ENCODE measurements at regions of chr19 and their contacts with region 1.

Region 1: GRCh38 chr19:48970923-48971395 is 5.8 kb downstream of the FTL start:
- DNase-seq: peak; percentile 91 to 96
- ATAC-seq: peak; percentile 66
- H3K4me3 ChIP-seq: no peak overlapping the region
- H3K27ac ChIP-seq: peak overlapping the region in 1 of 2 donors; percentile 32
- H3K4me1 ChIP-seq: no peaks in the 10 kb centered on the region
- H3K27me3 ChIP-seq: no peaks in the 10 kb centered on the region

Region 2: GRCh38 chr19:48646001-48646721 is 324.8 kb before region 1 on chr19 and contains the start of gene CA11:
- intact Hi-C with region 1: loop called in 1 of 2 experiments (anchors 10 kb)
- DNase-seq: peak; percentile 92 to 95
- ATAC-seq: peak; percentile 95
- H3K4me3 ChIP-seq: peak within 1 kb of the TSS; percentile 7 to 8
- H3K27ac ChIP-seq: peak within 1 kb of the TSS; percentile 1 to 18
- H3K4me1 ChIP-seq: peaks cover 0 to 3% of the 10 kb centered on the region in 2 donors
- H3K27me3 ChIP-seq: no peaks in the 10 kb centered on the region
- total RNA-seq, gene CA11: 6.4 to 12.0 TPM

Region 3: DNA sequence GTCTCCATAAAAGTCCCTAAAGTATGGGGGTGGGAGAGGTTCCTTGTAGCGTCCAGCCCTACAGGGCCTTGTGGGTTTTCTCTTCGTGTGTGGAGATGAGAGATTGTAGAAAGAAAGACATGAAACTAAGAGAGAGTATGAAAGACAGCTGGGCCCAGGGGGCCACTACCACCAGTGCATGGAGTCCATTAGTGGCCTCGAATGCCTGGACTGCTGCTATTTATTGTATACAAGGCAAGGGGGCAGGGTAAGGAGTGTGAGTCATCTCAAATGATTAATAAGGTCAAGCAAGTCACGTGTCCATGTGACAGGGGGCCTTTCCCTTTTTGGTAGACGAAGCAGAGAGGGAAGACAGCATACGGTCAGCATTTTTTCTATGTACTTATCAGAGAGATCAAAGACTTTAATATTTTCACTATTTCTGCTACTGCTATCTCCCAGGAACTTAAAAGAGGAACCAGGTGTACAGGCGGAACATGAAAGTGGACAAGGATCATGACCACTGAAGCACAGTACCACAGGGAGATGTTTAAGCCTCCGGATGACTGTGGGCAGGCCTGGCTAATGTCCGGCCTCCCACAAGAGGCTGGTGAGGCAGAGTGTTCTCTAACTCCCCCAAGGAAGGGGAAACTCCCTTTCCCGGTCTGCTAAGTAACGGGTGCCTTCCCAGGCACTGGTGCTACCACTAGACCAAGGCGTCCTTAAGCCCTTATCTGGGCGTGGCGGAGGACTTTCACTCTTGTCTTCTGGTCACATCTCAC is 190.1 kb before region 1 on chr19:
- intact Hi-C with region 1: loop called in 1 of 2 experiments (anchors 5 kb)
- DNase-seq: no peak
- ATAC-seq: no peak
- H3K4me3 ChIP-seq: no peak overlapping the region
- H3K27ac ChIP-seq: no peak overlapping the region
- H3K4me1 ChIP-seq: no peaks in the 10 kb centered on the region
- H3K27me3 ChIP-seq: no peaks in the 10 kb centered on the region

Region 4: DNA sequence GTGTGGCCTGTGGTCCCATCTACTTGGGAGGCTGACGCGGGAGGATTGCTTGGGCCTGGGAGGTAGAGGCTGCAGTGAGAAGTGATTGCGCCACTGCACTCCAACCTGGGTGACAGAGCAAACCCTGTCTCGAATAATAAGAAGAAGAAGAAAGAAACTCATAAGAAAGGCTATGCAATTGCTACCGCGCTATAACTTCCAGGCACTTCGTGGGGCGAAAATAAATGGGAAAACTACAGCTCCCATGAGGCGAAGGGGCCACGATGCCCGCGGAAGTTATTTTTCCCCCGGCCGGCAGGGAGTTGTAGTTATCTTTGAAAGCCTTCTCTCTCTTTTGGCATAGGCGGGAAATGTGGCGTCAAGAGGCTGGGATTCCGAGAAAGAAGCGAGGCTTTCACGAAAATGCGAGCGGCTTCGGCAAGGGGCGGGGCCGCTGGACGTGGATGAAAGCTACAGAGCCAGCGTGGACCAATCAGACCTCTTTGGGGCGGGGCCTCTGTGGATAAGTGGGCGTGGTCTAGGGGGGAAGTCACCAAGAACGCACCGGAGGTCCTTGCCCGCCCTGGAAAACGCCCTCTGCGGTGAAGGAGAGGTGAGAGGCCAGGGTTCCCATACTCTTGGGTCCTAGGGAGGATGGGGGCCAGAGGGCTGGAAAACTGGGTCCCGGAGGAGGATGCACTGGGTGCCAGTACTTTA is 71.0 kb before region 1 on chr19 and contains the start of gene NUCB1:
- intact Hi-C with region 1: loop called in 1 of 2 experiments (anchors 5 kb)
- DNase-seq: peak; percentile 99 to 100
- ATAC-seq: peak; percentile 98
- H3K4me3 ChIP-seq: peak within 1 kb of the TSS; percentile 38 to 75
- H3K27ac ChIP-seq: peak within 1 kb of the TSS; percentile 15 to 66
- H3K4me1 ChIP-seq: peaks cover 0 to 1% of the 10 kb centered on the region in 2 donors
- H3K27me3 ChIP-seq: no peaks in the 10 kb centered on the region
- total RNA-seq, gene NUCB1: 276 to 380 TPM

Measured in aorta (tissue), 5 donors.